GM13977 (cell line): ENCODE measurements at regions of chr15 and their contacts with region 1.

Region 1: GRCh38 chr15:92808978-92809879 is 90.9 kb upstream of the CHD2 start:
- DNase-seq: peak; percentile 97
- CTCF ChIP-seq: peak; percentile 99

Region 2: GRCh38 chr15:92586383-92586942 is 222.8 kb before region 1 on chr15:
- in situ Hi-C with region 1: no loop called
- DNase-seq: no peak
- CTCF ChIP-seq: no peak

Region 3: GRCh38 chr15:92881802-92882696 is 72.8 kb after region 1 on chr15:
- in situ Hi-C with region 1: loop called (anchors 10 kb)
- DNase-seq: peak; percentile 98
- CTCF ChIP-seq: no peak

Region 4: GRCh38 chr15:92903941-92904831 is 95.0 kb after region 1 on chr15:
- in situ Hi-C with region 1: loop called (anchors 5 kb)
- DNase-seq: peak; percentile 87
- CTCF ChIP-seq: no peak

Region 5: DNA sequence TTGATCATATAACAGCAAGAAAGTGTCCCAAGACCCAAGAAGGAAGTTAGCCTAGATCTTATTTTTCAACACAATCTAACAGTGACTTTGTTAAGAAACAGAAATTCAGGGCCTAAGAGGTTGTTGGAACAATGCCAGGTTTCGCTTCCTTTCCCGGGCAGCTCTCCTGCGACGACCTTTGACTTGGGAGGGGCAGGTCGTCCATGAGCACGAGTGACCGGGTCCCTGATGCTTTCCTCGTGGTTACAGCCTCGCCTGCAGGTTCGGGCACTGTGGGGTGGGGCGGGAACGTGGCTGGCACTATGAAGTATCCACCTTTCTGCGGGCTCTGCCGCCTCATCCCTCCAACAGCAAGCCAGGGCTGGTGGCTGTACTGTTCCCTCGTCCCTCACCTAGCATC is 369.8 kb after region 1 on chr15:
- in situ Hi-C with region 1: no loop called
- DNase-seq: no peak
- CTCF ChIP-seq: no peak